ENCODE measurements at regions of chr15 and their contacts with region 1.

Region 1: DNA sequence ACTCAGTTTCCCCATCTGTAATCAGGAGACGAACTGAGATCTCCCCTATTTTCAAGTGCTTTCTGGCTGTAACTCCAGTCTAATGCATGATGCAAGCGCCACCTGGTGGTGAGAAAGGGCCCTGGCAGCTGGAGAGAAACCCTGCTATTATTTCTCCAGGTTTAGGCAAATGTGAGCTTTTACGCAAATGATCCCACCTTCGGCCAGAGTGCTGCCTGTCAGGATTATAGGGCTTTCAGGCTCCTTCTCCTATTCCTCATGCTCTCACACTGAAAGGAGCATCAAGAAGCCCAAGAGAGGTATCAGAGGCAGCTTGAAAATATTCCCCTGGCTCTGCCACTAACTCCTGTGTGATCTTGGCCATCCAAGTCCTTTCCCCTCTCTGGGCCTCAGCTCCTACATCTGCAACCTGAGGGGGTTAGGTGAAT is 93.9 kb upstream of the RASGRF1 start:
- DNase-seq: peak; percentile 46 to 78
- ATAC-seq: peak in 1 of 3 donors; percentile 55
- H3K4me3 ChIP-seq: no peak overlapping the region
- H3K4me3 Mint-ChIP-seq: no peak overlapping the region
- H3K27ac ChIP-seq: no peak overlapping the region
- H3K27ac Mint-ChIP-seq: no peak overlapping the region
- H3K4me1 ChIP-seq: no peaks in the 10 kb centered on the region
- H3K4me1 Mint-ChIP-seq: no peaks in the 10 kb centered on the region
- H3K27me3 ChIP-seq: no peaks in the 10 kb centered on the region
- H3K27me3 Mint-ChIP-seq: peaks cover 3 to 8% of the 10 kb centered on the region in 2 donors
- CTCF ChIP-seq: peak; percentile 97

Region 2: GRCh38 chr15:78638658-78639314 is 545.7 kb before region 1 on chr15:
- intact Hi-C with region 1: loop called (anchors 5 kb)
- DNase-seq: peak in 1 of 2 donors; percentile 59
- ATAC-seq: peak in 2 of 3 donors; percentile 44 to 56
- H3K4me3 ChIP-seq: no peak overlapping the region
- H3K4me3 Mint-ChIP-seq: no peak overlapping the region
- H3K27ac ChIP-seq: no peak overlapping the region
- H3K27ac Mint-ChIP-seq: no peak overlapping the region
- H3K4me1 ChIP-seq: peaks cover 11% of the 10 kb centered on the region
- H3K4me1 Mint-ChIP-seq: peaks cover 0 to 11% of the 10 kb centered on the region in 2 donors
- H3K27me3 ChIP-seq: peaks cover 11% of the 10 kb centered on the region
- H3K27me3 Mint-ChIP-seq: peaks cover 5 to 19% of the 10 kb centered on the region in 2 donors
- CTCF ChIP-seq: peak; percentile 11

Region 3: GRCh38 chr15:78750566-78750965 is 433.9 kb before region 1 on chr15:
- intact Hi-C with region 1: loop called (anchors 10 kb)
- DNase-seq: no peak
- ATAC-seq: no peak
- H3K4me3 ChIP-seq: no peak overlapping the region
- H3K4me3 Mint-ChIP-seq: peak overlapping the region; percentile 40
- H3K27ac ChIP-seq: no peak overlapping the region
- H3K27ac Mint-ChIP-seq: no peak overlapping the region
- H3K4me1 ChIP-seq: peaks cover 11% of the 10 kb centered on the region
- H3K4me1 Mint-ChIP-seq: peaks cover 5 to 6% of the 10 kb centered on the region in 2 donors
- H3K27me3 ChIP-seq: no peaks in the 10 kb centered on the region
- H3K27me3 Mint-ChIP-seq: no peaks in the 10 kb centered on the region
- CTCF ChIP-seq: no peak

Region 4: DNA sequence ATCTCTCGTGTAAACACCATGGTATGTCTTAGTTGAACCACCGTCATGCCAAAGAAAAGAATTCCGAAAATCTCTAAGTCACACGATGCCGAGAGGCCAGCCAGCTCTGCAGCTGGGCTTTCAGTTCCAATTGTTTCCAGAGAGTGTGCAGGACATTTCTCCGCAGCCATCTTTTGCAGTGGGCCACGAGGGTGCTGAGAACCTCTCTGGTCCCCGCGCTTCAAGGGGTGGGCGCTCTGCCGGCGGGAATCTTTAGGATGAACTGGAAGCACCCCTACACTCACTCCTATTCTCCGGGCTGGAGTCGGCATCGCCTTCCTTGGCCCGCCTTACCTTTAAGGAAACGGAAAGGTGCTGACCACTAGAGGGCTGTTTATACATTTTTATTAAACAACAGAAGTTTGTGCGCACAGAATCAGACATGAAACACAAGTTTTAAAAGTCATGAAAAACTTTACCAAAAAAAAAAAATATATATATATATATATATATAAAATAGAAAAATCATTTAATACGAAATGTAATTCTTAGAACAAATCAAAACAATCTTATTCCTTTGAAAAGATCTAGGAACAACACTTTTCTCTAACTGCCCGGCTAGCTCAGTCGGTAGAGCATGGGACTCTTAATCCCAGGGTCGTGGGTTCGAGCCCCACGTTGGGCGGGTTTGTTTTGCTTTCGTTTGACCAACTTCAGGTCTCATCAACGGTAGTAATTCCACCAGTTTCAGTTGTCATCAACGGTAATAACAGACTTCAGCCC is 324.3 kb before region 1 on chr15:
- intact Hi-C with region 1: loop called (anchors 10 kb)
- DNase-seq: peak; percentile 62 to 80
- ATAC-seq: peak; percentile 77 to 85 (median 83)
- H3K4me3 ChIP-seq: peak overlapping the region; percentile 39
- H3K4me3 Mint-ChIP-seq: peak overlapping the region; percentile 88
- H3K27ac ChIP-seq: no peak overlapping the region
- H3K27ac Mint-ChIP-seq: peak overlapping the region; percentile 84 to 86
- H3K4me1 ChIP-seq: peaks cover 6% of the 10 kb centered on the region
- H3K4me1 Mint-ChIP-seq: peaks cover 5 to 8% of the 10 kb centered on the region in 2 donors
- H3K27me3 ChIP-seq: no peaks in the 10 kb centered on the region
- H3K27me3 Mint-ChIP-seq: no peaks in the 10 kb centered on the region
- CTCF ChIP-seq: peak; percentile 59

Region 5: GRCh38 chr15:79028411-79028964 is 156.0 kb before region 1 on chr15:
- intact Hi-C with region 1: loop called (anchors 1 kb)
- DNase-seq: peak in 1 of 2 donors; percentile 23
- ATAC-seq: no peak
- H3K4me3 ChIP-seq: no peak overlapping the region
- H3K4me3 Mint-ChIP-seq: no peak overlapping the region
- H3K27ac ChIP-seq: no peak overlapping the region
- H3K27ac Mint-ChIP-seq: no peak overlapping the region
- H3K4me1 ChIP-seq: no peaks in the 10 kb centered on the region
- H3K4me1 Mint-ChIP-seq: no peaks in the 10 kb centered on the region
- H3K27me3 ChIP-seq: no peaks in the 10 kb centered on the region
- H3K27me3 Mint-ChIP-seq: peaks cover 0 to 8% of the 10 kb centered on the region in 2 donors
- CTCF ChIP-seq: no peak